GM12878 (cell line): ENCODE measurements at regions of chr10 and their contacts with region 1.

Region 1: GRCh38 chr10:6491841-6492609 is 88.1 kb downstream of the PRKCQ start:
- DNase-seq: no peak
- ATAC-seq: peak; percentile 83
- H3K4me3 ChIP-seq: no peak overlapping the region
- H3K27ac ChIP-seq: no peak overlapping the region
- H3K4me1 ChIP-seq: no peaks in the 10 kb centered on the region
- H3K27me3 ChIP-seq: no peaks in the 10 kb centered on the region; a peak in 2 of 4 replicates
- CTCF ChIP-seq: no peak
- EP300 ChIP-seq: peak; percentile 87 to 96; a peak in 3 of 4 replicates
- POLR2A ChIP-seq: no peak
- RAD21 ChIP-seq: no peak

Region 2: DNA sequence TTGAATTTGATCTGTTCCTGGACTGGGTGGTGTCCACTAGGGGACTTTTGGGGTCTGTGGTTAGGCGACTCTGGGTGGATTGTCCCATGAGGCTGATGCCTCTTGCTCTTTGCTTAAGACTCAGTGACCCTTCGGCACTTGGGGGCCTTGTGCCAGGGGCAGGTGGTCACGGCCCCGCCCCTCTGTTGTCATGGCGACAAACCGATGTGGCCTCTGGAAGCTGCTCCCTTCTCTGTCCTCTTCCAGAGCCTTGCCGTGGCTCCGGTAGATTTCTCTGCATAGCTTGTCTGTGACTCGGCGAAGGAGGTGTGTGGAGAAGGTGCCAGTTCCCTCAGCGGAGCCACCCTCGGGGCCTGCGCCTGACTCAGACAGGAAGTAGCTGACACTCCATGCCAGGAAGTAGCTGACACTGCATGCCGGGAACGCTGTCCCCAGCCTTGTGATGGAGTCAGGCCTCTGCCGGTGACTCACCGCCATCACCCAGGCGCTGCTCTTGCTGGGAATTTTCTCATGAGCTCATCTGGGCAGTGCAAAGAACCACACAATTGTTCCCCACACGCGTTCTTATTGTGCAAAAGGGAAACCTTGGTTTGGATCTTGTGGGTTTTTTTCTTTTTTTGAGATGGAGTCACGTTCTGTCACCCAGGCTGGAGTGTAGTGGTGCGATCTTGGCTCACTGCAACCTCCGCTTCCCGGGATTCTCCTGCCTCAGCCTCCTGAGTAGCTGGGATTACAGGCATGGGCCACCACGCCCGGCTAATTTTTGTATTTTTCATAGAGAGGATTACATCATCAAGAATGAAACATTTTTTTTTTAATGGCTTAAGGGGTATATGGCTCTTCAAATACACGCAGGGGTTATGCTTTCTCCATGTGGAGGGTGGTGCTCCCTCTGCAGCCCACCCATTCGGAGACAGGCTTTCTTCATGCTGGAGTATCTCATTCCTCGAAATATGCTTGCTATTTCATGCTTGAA is 216.7 kb before region 1 on chr10:
- CTCF ChIA-PET with region 1: no interaction called
- POLR2A ChIA-PET with region 1: no interaction called
- RAD21 ChIA-PET with region 1: no interaction called
- SMC1A ChIA-PET with region 1: no interaction called
- in situ Hi-C with region 1: no loop called
- intact Hi-C with region 1: no loop called
- DNase-seq: peak; percentile 49
- ATAC-seq: peak; percentile 77
- H3K4me3 ChIP-seq: peak overlapping the region; percentile 10; the same call in 1 of the 2 replicates
- H3K27ac ChIP-seq: peak overlapping the region; percentile 51
- H3K4me1 ChIP-seq: peaks cover 28% of the 10 kb centered on the region
- H3K27me3 ChIP-seq: peaks cover 0 to 1% of the 10 kb centered on the region in 2 experiments; a peak in 1 of 4 replicates
- CTCF ChIP-seq: 0 out of 6 replicates have a peak, but pooled peaks of 1 of the 3 experiments have one; percentile 2
- EP300 ChIP-seq: 0 out of 4 replicates have a peak, but pooled peaks have one; percentile 51 to 52
- POLR2A ChIP-seq: peak; percentile 77
- RAD21 ChIP-seq: peak; percentile 10; the same call in 1 of the 2 replicates

Region 3: GRCh38 chr10:6401562-6402348 is 90.3 kb before region 1 on chr10:
- CTCF ChIA-PET with region 1: no interaction called
- POLR2A ChIA-PET with region 1: no interaction called
- RAD21 ChIA-PET with region 1: no interaction called
- SMC1A ChIA-PET with region 1: no interaction called
- in situ Hi-C with region 1: no loop called
- intact Hi-C with region 1: no loop called
- DNase-seq: peak; percentile 37
- ATAC-seq: peak; percentile 92
- H3K4me3 ChIP-seq: no peak overlapping the region
- H3K27ac ChIP-seq: no peak overlapping the region
- H3K4me1 ChIP-seq: no peaks in the 10 kb centered on the region
- H3K27me3 ChIP-seq: peaks cover 0 to 5% of the 10 kb centered on the region in 2 experiments; a peak in 3 of 4 replicates
- CTCF ChIP-seq: peak; percentile 69 to 88 (median 77)
- EP300 ChIP-seq: no peak
- POLR2A ChIP-seq: no peak
- RAD21 ChIP-seq: peak; percentile 98

Region 4: GRCh38 chr10:6464862-6465430 is 27.1 kb before region 1 on chr10:
- CTCF ChIA-PET with region 1: interaction called, 3 read pairs
- POLR2A ChIA-PET with region 1: interaction called, 6 read pairs
- RAD21 ChIA-PET with region 1: interaction called, 4 read pairs
- SMC1A ChIA-PET with region 1: interaction called, 27 read pairs
- in situ Hi-C with region 1: no loop called
- intact Hi-C with region 1: no loop called
- DNase-seq: no peak
- ATAC-seq: peak; percentile 54
- H3K4me3 ChIP-seq: no peak overlapping the region
- H3K27ac ChIP-seq: no peak overlapping the region
- H3K4me1 ChIP-seq: no peaks in the 10 kb centered on the region
- H3K27me3 ChIP-seq: no peaks in the 10 kb centered on the region
- CTCF ChIP-seq: no peak
- EP300 ChIP-seq: no peak
- POLR2A ChIP-seq: no peak
- RAD21 ChIP-seq: no peak

Region 5: DNA sequence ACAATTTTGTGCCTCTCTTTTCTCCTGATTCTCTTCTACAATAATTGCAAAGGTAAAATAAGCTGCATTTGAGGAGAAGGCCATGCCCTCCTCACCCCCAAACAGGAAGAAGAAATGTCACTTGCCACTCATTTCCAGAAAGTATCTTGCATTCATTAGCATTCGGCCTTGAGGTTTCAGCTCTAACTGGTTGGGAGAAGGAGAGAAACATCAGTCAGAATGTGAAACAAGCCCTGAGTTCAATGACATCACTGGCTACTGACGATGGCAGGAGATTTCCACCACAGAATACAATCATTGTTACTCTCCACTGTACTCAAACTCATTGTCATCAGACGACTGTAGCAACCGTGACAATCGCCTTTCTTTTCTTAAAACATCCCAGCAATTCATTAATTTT is 15.3 kb after region 1 on chr10:
- CTCF ChIA-PET with region 1: interaction called, 5 read pairs
- POLR2A ChIA-PET with region 1: interaction called, 4 read pairs
- RAD21 ChIA-PET with region 1: interaction called, 13 read pairs
- SMC1A ChIA-PET with region 1: interaction called, 92 read pairs
- in situ Hi-C with region 1: no loop called
- intact Hi-C with region 1: no loop called
- DNase-seq: peak; percentile 26
- ATAC-seq: peak; percentile 90
- H3K4me3 ChIP-seq: no peak overlapping the region
- H3K27ac ChIP-seq: no peak overlapping the region
- H3K4me1 ChIP-seq: no peaks in the 10 kb centered on the region
- H3K27me3 ChIP-seq: no peaks in the 10 kb centered on the region
- CTCF ChIP-seq: no peak
- EP300 ChIP-seq: peak; percentile 52 to 92; a peak in 3 of 4 replicates
- POLR2A ChIP-seq: no peak
- RAD21 ChIP-seq: no peak